CD4-positive, alpha-beta memory T cell (primary cell): ENCODE measurements at regions of chr10 and their contacts with region 1.

Region 1: GRCh38 chr10:100020142-100020885 is 10.6 kb upstream of the DNMBP start:
- DNase-seq: no peak
- H3K4me3 ChIP-seq: no peak overlapping the region
- H3K4me3 Mint-ChIP-seq: no peak overlapping the region
- H3K27ac ChIP-seq: no peak overlapping the region
- H3K27ac Mint-ChIP-seq: peak overlapping the region in 2 of 7 donors; percentile 12 to 25
- H3K4me1 ChIP-seq: no peaks in the 10 kb centered on the region
- H3K4me1 Mint-ChIP-seq: peaks cover 0 to 4% (median 1%) of the 10 kb centered on the region in 4 donors
- H3K27me3 ChIP-seq: no peaks in the 10 kb centered on the region
- H3K27me3 Mint-ChIP-seq: peaks cover 0 to 4% of the 10 kb centered on the region in 2 donors

Region 2: GRCh38 chr10:100009793-100010676 is 10.3 kb before region 1 on chr10 and contains the start of gene DNMBP:
- CTCF ChIA-PET with region 1: interaction called, 11 read pairs
- POLR2A ChIA-PET with region 1: no interaction called
- intact Hi-C with region 1: no loop called
- DNase-seq: peak; percentile 75 to 81 (median 79)
- H3K4me3 ChIP-seq: peak within 1 kb of the TSS; percentile 65 to 89
- H3K4me3 Mint-ChIP-seq: peak within 1 kb of the TSS; percentile 89 to 97 (median 95)
- H3K27ac ChIP-seq: peak within 1 kb of the TSS; percentile 34
- H3K27ac Mint-ChIP-seq: peak within 1 kb of the TSS; percentile 76 to 93 (median 90)
- H3K4me1 ChIP-seq: peaks cover 19% of the 10 kb centered on the region
- H3K4me1 Mint-ChIP-seq: peaks cover 22 to 48% (median 31%) of the 10 kb centered on the region in 4 donors
- H3K27me3 ChIP-seq: no peaks in the 10 kb centered on the region
- H3K27me3 Mint-ChIP-seq: peaks cover 0 to 3% of the 10 kb centered on the region in 2 donors
- total RNA-seq, gene DNMBP: 3.8 to 4.0 TPM